ENCODE measurements at regions of chr20 and their contacts with region 1.

Region 1: GRCh38 chr20:50958615-50959542 is at the start of gene MOCS3:
- DNase-seq: peak; percentile 96
- H3K4me3 ChIP-seq: peak within 1 kb of the TSS; percentile 100
- H3K27ac ChIP-seq: peak within 1 kb of the TSS; percentile 64
- H3K4me1 ChIP-seq: peaks cover 44% of the 10 kb centered on the region
- CTCF ChIP-seq: no peak
- total RNA-seq, gene MOCS3: 4.8 and 7.7 TPM in 2 replicates

Region 2: GRCh38 chr20:50731055-50731871 is 227.6 kb before region 1 on chr20 and contains the start of gene PARD6B:
- CTCF ChIA-PET with region 1: no interaction called
- POLR2A ChIA-PET with region 1: no interaction called
- intact Hi-C with region 1: loop called (anchors 1 kb)
- DNase-seq: peak; percentile 100
- H3K4me3 ChIP-seq: peak within 1 kb of the TSS; percentile 75
- H3K27ac ChIP-seq: peak within 1 kb of the TSS; percentile 24
- H3K4me1 ChIP-seq: peaks cover 29% of the 10 kb centered on the region
- CTCF ChIP-seq: no peak
- total RNA-seq, gene PARD6B: 4.4 and 5.8 TPM in 2 replicates

Region 3: GRCh38 chr20:50746138-50746940 is 212.5 kb before region 1 on chr20:
- CTCF ChIA-PET with region 1: no interaction called
- POLR2A ChIA-PET with region 1: no interaction called
- intact Hi-C with region 1: no loop called
- DNase-seq: no peak
- H3K4me3 ChIP-seq: no peak overlapping the region
- H3K27ac ChIP-seq: no peak overlapping the region
- H3K4me1 ChIP-seq: no peaks in the 10 kb centered on the region
- CTCF ChIP-seq: no peak

Region 4: GRCh38 chr20:50799890-50800655 is 158.8 kb before region 1 on chr20:
- CTCF ChIA-PET with region 1: no interaction called
- POLR2A ChIA-PET with region 1: no interaction called
- intact Hi-C with region 1: no loop called
- DNase-seq: peak; percentile 86
- H3K4me3 ChIP-seq: peak overlapping the region; percentile 61
- H3K27ac ChIP-seq: peak overlapping the region; percentile 98
- H3K4me1 ChIP-seq: peaks cover 86% of the 10 kb centered on the region
- CTCF ChIP-seq: no peak

Region 5: GRCh38 chr20:50929299-50930138 is 29.4 kb before region 1 on chr20:
- CTCF ChIA-PET with region 1: interaction called, 5 read pairs
- POLR2A ChIA-PET with region 1: interaction called, 5 read pairs
- intact Hi-C with region 1: loop called (anchors 2 kb)
- DNase-seq: peak; percentile 97
- H3K4me3 ChIP-seq: peak overlapping the region; percentile 93
- H3K27ac ChIP-seq: peak overlapping the region; percentile 89
- H3K4me1 ChIP-seq: peaks cover 59% of the 10 kb centered on the region
- CTCF ChIP-seq: peak; percentile 100

Region 6: DNA sequence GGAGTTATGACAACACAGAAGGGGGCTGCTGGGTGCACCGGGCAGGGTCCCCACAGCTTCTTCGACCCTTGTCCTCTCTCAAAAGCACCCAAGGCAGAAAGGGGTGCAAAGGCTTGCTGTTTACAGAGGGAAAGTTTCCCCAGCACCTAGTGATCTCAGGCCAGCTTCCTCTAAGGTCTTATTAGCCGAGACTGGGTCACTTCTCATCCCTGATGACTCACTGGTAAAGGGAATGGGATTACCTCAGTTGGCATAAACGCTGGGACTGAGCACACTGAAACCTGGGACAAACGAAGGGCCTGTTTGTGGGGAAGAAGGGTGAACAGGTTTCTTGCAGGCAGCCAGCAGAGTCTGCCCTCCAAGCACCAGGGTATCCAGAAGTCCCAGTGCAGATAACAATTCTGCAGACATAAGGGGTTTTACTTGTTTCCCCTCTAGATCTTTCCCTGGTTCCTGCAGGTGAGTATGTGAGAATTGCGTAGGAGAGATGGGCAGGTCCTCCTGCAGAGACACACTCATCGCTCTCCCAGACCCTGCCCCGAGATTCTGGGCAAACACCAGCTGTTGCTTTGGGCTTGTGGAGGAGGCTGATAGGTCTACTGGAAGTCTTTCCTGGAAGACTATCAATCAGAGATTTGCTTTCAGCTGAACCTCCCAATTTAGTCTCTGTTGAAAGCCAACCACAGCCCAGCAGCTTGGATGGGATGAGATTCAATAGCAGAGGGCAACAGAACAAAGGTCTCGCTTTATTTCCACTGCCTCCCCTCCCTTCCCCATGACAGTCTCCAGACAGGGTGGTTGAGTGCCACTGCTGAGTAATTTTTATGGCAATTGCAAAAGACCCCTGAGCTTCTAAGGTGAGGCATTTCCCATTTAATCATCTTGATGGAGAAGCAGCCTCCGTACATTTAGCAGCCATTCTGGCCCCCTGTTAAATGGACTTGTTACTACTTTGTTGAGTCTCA is 38.3 kb after region 1 on chr20:
- CTCF ChIA-PET with region 1: no interaction called
- POLR2A ChIA-PET with region 1: no interaction called
- intact Hi-C with region 1: no loop called
- DNase-seq: no peak
- H3K4me3 ChIP-seq: no peak overlapping the region
- H3K27ac ChIP-seq: no peak overlapping the region
- H3K4me1 ChIP-seq: peaks cover 8% of the 10 kb centered on the region
- CTCF ChIP-seq: no peak

Region 7: GRCh38 chr20:51507216-51508036 is 548.5 kb after region 1 on chr20:
- CTCF ChIA-PET with region 1: no interaction called
- POLR2A ChIA-PET with region 1: no interaction called
- intact Hi-C with region 1: no loop called
- DNase-seq: no peak
- H3K4me3 ChIP-seq: no peak overlapping the region
- H3K27ac ChIP-seq: no peak overlapping the region
- H3K4me1 ChIP-seq: peaks cover 6% of the 10 kb centered on the region
- CTCF ChIP-seq: no peak